Naive thymus-derived CD8-positive, alpha-beta T cell (primary cell): ENCODE measurements at regions of chr2 and their contacts with region 1.

Region 1: DNA sequence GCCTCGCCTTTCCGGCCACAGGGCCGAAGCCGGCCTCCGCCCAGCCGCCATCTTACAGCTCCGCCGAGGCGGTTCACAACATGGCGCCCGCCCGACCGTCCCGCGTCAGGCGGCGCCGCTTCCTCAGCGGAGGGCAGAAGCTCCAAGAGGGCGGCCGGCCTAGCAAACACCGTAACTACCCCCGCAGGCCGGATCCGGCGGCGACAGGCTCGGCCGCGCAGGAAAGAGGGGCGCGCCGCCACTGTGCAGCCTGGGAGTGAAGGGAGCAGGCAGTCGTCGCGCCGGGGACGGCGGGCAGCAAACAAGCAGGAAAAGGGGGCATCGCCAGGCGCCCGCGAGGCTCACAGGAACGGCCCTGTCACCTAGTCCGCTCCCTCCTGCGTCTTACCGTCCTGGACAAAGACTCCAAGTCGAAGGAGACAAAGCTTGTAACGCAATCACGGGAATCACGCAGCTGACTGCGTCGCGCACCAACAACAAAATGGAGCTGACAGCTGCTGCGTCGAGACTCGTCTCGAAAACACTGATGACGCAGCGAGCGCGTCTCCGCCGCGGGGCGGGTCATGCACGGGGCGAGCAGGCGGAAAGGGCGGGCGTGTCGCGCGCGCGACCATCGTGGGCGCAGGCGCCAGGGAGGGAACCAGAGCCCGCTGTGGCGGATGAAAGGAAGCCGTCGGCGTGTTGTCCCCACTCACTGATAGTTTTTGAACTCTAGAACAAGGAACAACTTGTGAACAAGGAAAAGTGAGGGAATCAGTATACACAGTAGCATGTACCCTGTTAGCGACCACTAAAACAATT is at the start of gene CLK1:
- DNase-seq: peak; percentile 92 to 98 (median 96)
- ATAC-seq: peak; percentile 75 to 76
- H3K4me3 Mint-ChIP-seq: peak within 1 kb of the TSS; percentile 85 to 100 (median 95)
- H3K27ac Mint-ChIP-seq: peak within 1 kb of the TSS; percentile 90 to 100 (median 99)
- H3K4me1 Mint-ChIP-seq: peaks cover 23 to 53% (median 45%) of the 10 kb centered on the region in 4 donors
- H3K27me3 Mint-ChIP-seq: no peaks in the 10 kb centered on the region
- polyA plus RNA-seq, gene CLK1: 13.6 to 45.3 (median 15.5) TPM

Region 2: DNA sequence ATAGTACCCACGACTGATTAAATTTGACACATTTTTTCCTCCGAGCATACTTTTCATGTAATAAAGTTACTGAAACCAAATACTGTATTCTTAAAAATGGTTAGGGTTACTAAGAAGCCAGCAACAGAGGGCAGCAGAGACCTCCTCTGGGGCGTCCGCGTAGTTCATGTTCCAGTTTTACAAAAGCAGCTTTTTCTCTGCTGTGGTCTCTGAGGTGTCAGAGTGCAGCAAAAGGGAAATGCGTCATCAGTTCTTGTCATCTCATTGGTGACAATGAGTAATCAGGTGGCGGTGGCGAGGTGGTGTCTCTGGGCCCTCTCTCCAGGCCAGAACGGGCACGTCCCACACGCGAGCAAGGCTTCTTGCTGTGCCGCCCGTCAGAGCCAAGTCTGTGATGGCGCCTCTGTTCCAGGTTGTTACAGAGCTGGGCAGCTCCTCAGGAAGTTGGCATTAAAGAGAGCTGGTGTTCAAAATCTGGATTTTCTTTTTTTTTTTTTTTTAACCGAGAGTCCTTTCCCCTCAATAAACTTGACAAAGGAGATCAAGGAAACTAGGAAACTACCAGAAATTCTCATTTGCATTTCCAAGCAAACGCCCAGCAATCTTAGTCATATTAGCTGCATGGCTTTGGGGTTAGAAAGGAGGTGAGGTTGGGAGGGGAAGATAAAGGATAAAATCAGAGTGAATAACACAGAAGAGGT is 151.2 kb before region 1 on chr2:
- POLR2A ChIA-PET with region 1: interaction called, 48 read pairs
- DNase-seq: peak; percentile 74 to 97 (median 90)
- ATAC-seq: peak; percentile 98 to 99
- H3K4me3 Mint-ChIP-seq: peak overlapping the region; percentile 75 to 90 (median 84)
- H3K27ac Mint-ChIP-seq: peak overlapping the region; percentile 98 to 100 (median 99)
- H3K4me1 Mint-ChIP-seq: peaks cover 2 to 18% (median 10%) of the 10 kb centered on the region in 4 donors
- H3K27me3 Mint-ChIP-seq: peaks cover 0 to 1% (median 0%) of the 10 kb centered on the region in 5 donors

Region 3: GRCh38 chr2:200778038-200778437 is 86.3 kb before region 1 on chr2:
- POLR2A ChIA-PET with region 1: no interaction called
- DNase-seq: no peak
- ATAC-seq: no peak
- H3K4me3 Mint-ChIP-seq: no peak overlapping the region
- H3K27ac Mint-ChIP-seq: no peak overlapping the region
- H3K4me1 Mint-ChIP-seq: no peaks in the 10 kb centered on the region
- H3K27me3 Mint-ChIP-seq: peaks cover 0 to 1% (median 0%) of the 10 kb centered on the region in 5 donors

Region 4: DNA sequence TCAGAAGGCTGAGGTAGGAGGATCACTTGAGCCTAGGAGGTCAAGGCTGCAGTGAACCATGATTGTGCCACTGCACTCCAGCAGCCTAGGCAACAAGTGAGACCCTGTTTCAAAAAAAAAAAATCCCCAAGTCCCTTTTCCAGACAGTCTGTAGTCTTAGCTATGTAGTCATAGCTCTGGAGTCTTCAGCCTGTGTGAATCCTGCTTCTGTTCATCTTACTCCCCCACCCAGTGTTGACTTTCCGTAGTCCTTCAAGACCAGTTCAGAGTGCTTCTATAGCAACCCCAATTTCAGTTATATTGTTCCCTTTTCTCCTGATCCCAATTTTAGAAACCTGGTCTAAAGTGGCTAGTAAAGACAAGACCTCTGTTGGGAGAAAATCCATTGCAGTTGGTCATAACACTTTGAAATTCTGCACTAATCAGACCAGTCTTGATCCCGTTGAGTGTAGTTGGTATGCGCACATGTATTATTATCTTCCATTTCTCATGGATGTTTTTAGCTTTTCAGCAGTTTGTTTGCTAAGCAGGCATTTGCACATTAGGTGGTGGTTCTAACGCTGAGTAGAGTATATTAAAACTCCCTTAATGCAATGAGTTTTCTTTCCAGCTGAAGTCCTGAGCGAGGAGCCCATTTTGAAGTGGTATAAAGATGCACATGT is 43.7 kb before region 1 on chr2:
- POLR2A ChIA-PET with region 1: interaction called, 28 read pairs
- DNase-seq: no peak
- ATAC-seq: no peak
- H3K4me3 Mint-ChIP-seq: no peak overlapping the region
- H3K27ac Mint-ChIP-seq: peak overlapping the region in 7 of 10 donors; percentile 7 to 82 (median 58)
- H3K4me1 Mint-ChIP-seq: peaks cover 7 to 10% (median 9%) of the 10 kb centered on the region in 4 donors
- H3K27me3 Mint-ChIP-seq: no peaks in the 10 kb centered on the region

Region 5: GRCh38 chr2:200850512-200851256 is 13.7 kb before region 1 on chr2:
- POLR2A ChIA-PET with region 1: interaction called, 23 read pairs
- DNase-seq: no peak
- ATAC-seq: peak in 1 of 2 donors; percentile 20
- H3K4me3 Mint-ChIP-seq: peak overlapping the region in 3 of 10 donors; percentile 19 to 36 (median 34)
- H3K27ac Mint-ChIP-seq: peak overlapping the region in 8 of 10 donors; percentile 0 to 84 (median 54)
- H3K4me1 Mint-ChIP-seq: peaks cover 7 to 13% (median 8%) of the 10 kb centered on the region in 4 donors
- H3K27me3 Mint-ChIP-seq: no peaks in the 10 kb centered on the region

Region 6: DNA sequence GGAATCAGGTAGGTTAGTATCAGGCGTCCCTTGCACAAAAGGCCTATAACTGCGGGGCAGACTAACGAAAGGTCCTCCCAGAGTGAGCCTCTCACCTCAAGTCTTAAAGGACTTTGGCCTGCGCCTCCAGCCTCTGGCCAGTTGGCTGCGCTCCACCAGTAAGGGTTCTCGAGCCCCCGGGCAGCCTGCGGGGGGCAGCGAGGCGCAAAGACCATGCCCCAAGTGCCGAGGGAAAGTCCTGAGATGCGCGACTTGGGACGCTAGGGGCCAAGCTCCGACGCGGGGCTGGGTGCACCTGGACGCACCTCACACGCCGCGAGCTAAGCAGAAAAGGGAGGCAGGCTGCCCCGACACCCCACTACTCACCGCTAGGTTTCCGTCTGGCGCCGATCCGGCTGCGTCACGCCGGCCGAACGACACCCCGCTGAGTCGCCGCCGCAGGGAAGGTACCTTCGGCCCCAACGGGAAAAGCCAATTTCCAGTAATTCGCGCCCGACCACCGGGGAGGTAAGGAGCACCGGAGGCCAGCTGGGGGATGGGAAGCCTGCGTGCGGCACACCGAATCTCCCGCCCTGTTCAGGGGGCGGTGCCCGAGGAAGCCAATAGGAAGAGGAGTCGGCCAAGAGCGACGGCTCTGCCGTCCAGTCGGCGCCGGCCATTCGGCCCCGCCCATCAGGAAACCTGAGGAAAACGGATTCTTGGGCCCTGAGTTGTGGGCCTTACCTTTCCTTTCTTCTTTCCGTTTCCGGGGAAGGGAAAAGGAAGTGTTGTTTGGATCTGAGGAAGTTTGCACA is 98.9 kb after region 1 on chr2 and contains the start of gene ORC2:
- POLR2A ChIA-PET with region 1: interaction called, 11 read pairs
- DNase-seq: peak; percentile 85 to 99 (median 92)
- ATAC-seq: peak; percentile 93 to 94
- H3K4me3 Mint-ChIP-seq: peak within 1 kb of the TSS; percentile 95 to 99 (median 98)
- H3K27ac Mint-ChIP-seq: peak within 1 kb of the TSS; percentile 95 to 100 (median 99)
- H3K4me1 Mint-ChIP-seq: peaks cover 35 to 67% (median 60%) of the 10 kb centered on the region in 4 donors
- H3K27me3 Mint-ChIP-seq: no peaks in the 10 kb centered on the region
- polyA plus RNA-seq, gene ORC2: 9.4 to 11.1 (median 9.4) TPM

Region 7: DNA sequence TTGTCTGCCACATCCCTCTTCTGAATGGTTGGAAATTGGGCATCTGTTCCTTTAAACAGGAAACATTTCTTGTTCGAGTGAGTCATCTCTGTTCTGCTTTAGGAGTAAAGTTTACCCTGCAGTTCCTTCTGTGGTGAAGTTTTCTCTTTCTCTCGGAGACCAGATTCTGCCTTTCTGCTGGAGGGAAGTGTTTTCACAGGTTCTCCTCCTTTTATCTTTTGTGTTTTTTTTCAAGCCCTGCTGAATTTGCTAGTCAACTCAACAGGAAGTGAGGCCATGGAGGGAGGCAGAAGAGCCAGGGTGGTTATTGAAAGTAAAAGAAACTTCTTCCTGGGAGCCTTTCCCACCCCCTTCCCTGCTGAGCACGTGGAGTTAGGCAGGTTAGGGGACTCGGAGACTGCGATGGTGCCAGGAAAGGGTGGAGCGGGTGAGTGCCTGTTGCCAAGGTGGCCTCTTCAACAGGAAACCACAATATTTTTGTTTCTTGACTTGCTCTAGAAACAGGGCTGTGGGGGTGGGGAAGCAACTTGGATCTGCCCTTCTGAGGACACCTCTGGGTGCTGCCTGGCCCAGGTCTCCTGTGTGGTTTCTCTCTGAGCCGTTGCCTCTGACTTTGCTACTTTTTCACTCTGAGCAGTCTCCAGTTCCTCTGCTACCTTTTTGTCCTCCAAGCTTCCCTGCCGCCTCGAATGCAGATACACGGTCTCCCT is 393.7 kb after region 1 on chr2:
- POLR2A ChIA-PET with region 1: interaction called, 14 read pairs
- DNase-seq: peak; percentile 70 to 100 (median 96)
- ATAC-seq: peak; percentile 69 to 77
- H3K4me3 Mint-ChIP-seq: peak overlapping the region; percentile 83 to 100 (median 92)
- H3K27ac Mint-ChIP-seq: peak overlapping the region; percentile 92 to 100 (median 99)
- H3K4me1 Mint-ChIP-seq: peaks cover 40 to 85% (median 77%) of the 10 kb centered on the region in 4 donors
- H3K27me3 Mint-ChIP-seq: peaks cover 0 to 1% (median 0%) of the 10 kb centered on the region in 5 donors